ENCODE measurements at regions of chr1 and their contacts with region 1.

Region 1: DNA sequence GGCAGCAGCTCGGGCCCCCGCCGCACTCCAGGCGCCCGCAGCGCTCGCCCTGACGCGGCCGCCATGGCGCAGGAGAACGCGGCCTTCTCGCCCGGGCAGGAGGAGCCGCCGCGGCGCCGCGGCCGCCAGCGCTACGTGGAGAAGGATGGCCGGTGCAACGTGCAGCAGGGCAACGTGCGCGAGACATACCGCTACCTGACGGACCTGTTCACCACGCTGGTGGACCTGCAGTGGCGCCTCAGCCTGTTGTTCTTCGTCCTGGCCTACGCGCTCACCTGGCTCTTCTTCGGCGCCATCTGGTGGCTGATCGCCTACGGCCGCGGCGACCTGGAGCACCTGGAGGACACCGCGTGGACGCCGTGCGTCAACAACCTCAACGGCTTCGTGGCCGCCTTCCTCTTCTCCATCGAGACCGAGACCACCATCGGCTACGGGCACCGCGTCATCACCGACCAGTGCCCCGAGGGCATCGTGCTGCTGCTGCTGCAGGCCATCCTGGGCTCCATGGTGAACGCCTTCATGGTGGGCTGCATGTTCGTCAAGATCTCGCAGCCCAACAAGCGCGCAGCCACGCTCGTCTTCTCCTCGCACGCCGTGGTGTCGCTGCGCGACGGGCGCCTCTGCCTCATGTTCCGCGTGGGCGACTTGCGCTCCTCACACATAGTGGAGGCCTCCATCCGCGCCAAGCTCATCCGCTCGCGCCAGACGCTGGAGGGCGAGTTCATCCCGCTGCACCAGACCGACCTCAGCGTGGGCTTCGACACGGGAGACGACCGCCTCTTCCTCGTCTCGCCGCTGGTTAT is 2.8 kb downstream of the KCNJ9 start:
- DNase-seq: peak; percentile 80 to 95 (median 88)
- ATAC-seq: peak; percentile 89 to 95 (median 95)
- H3K4me3 ChIP-seq: peak overlapping the region in 3 of 4 donors; percentile 30 to 39 (median 30)
- H3K27ac ChIP-seq: no peak overlapping the region
- H3K4me1 ChIP-seq: no peaks in the 10 kb centered on the region
- H3K27me3 ChIP-seq: peaks cover 0 to 5% (median 0%) of the 10 kb centered on the region in 4 donors
- CTCF ChIP-seq: peak; percentile 57 to 78 (median 60)

Region 2: DNA sequence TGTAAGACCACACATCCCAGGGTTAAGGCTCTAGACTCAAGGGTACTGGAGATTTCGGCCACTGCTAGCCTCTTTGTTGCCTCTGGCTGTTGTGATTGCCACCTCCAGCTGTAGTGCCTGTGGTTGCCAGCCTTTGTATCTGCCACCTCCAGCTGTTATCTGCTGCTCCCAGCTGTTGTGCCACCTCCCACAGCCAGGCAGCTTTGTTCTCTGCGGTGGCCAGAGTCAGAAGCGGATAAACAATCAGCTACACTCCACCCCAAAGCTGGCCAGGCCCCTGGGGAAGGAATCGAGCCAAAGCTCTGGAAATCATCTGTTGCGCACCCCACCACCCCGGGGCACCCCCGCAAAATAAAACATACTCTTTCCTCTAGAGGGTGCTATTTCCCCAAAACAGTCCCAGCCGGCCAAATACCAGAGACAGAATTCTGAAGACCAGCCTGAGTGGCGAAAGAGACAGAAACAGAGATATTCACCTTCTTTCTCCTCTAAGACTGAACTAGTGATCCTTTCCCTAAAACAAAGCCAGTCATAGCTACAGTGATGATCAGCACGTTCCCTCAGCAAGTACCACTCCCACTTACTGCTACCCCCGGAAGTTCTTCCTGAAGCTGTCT is 37.6 kb before region 1 on chr1:
- intact Hi-C with region 1: loop called in 1 of 3 experiments (anchors 5 kb)
- DNase-seq: peak; percentile 68 to 81 (median 75)
- ATAC-seq: peak; percentile 88 to 96 (median 93)
- H3K4me3 ChIP-seq: peak overlapping the region in 1 of 4 donors; percentile 19
- H3K27ac ChIP-seq: peak overlapping the region in 1 of 4 donors; percentile 17
- H3K4me1 ChIP-seq: peaks cover 0 to 7% (median 0%) of the 10 kb centered on the region in 3 donors
- H3K27me3 ChIP-seq: no peaks in the 10 kb centered on the region
- CTCF ChIP-seq: peak; percentile 39 to 68 (median 54)